ENCODE measurements at regions of chr17 and their contacts with region 1.

Region 1: GRCh38 chr17:37373530-37374159 is 2.1 kb upstream of the C17orf78 start:
- DNase-seq: peak in 8 of 10 donors; percentile 42 to 75 (median 56)
- H3K4me3 ChIP-seq: peak overlapping the region in 1 of 59 donors; percentile 9
- H3K27ac ChIP-seq: no peak overlapping the region
- H3K27me3 ChIP-seq: no peaks in the 10 kb centered on the region
- CTCF ChIP-seq: peak; percentile 20 to 97 (median 90)

Region 2: DNA sequence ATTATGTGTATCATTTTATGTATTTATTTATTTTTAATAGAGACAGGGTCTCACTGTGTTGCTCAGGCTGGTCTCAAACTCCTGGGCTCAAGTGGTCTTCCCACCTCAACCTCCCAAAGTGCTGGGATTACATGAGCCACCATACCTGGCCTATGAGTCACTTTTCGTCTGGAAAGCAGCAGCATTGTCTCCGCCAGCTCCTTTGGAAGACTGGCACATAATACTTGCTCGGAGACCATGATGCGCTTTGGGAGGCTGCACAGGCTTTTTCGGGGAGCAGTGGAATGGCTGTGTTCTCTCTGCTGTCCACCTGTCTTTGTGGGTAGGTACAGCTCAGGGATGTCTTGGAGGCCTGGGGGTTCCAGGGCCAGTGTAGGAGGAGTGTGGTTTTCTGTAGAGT is 322.7 kb before region 1 on chr17:
- intact Hi-C with region 1: no loop called
- DNase-seq: no peak
- H3K4me3 ChIP-seq: no peak overlapping the region
- H3K27ac ChIP-seq: no peak overlapping the region
- H3K27me3 ChIP-seq: no peaks in the 10 kb centered on the region
- CTCF ChIP-seq: no peak

Region 3: DNA sequence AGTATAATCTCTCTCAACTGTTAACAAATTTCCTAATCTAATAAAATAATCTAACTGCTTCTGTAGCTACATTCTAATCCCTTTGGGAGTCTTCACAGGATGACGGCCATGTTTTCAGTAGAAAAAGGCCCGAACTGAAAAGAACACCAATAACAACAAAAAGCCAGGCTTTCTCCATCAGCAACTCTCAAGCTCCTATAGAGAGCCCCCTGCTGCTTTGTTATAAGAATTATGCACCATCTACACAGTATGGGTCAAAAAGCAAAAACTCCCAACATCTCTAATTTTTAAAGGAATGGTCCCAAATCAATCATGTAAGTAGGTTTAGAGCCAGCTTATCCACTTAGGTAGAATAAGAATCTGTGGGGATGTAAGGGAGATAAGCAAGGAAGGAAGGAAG is 161.5 kb before region 1 on chr17:
- intact Hi-C with region 1: no loop called
- DNase-seq: no peak
- H3K4me3 ChIP-seq: no peak overlapping the region
- H3K27ac ChIP-seq: no peak overlapping the region
- H3K27me3 ChIP-seq: no peaks in the 10 kb centered on the region
- CTCF ChIP-seq: peak in 32 of 56 donors; percentile 8 to 61 (median 29)

Region 4: GRCh38 chr17:37255432-37255831 is 118.2 kb before region 1 on chr17:
- intact Hi-C with region 1: loop called in 1 of 2 experiments (anchors 2 kb)
- DNase-seq: no peak
- H3K4me3 ChIP-seq: no peak overlapping the region
- H3K27ac ChIP-seq: no peak overlapping the region
- H3K27me3 ChIP-seq: no peaks in the 10 kb centered on the region
- CTCF ChIP-seq: peak in 11 of 56 donors; percentile 13 to 57 (median 23)

Region 5: DNA sequence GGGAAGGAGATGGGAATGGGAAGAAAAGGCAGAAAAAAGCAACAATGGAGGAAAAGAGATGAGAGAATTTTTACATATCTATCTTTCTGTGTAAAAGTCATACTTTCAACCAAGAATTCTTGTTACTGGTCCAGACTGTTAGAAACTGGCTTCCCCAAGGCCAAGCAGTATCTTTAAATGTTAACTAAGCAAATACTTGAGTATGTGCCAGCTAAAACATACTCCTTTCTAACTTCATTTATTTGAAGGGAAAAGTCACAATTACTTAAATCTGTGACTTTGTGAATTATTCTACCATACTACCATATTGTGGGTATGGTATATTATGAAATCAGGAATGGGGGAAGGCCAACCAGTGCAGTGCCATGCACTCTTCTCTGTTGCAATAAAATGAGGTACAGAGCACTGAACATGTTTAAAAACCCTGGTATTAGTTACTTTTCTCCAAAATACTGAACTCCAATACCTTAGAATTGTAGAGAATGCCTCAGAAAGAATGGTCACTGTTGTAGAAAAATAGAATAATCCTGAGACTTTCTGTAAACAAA is 90.2 kb before region 1 on chr17:
- intact Hi-C with region 1: no loop called
- DNase-seq: no peak
- H3K4me3 ChIP-seq: no peak overlapping the region
- H3K27ac ChIP-seq: peak overlapping the region in 1 of 59 donors; percentile 10
- H3K27me3 ChIP-seq: no peaks in the 10 kb centered on the region
- CTCF ChIP-seq: no peak

Region 6: DNA sequence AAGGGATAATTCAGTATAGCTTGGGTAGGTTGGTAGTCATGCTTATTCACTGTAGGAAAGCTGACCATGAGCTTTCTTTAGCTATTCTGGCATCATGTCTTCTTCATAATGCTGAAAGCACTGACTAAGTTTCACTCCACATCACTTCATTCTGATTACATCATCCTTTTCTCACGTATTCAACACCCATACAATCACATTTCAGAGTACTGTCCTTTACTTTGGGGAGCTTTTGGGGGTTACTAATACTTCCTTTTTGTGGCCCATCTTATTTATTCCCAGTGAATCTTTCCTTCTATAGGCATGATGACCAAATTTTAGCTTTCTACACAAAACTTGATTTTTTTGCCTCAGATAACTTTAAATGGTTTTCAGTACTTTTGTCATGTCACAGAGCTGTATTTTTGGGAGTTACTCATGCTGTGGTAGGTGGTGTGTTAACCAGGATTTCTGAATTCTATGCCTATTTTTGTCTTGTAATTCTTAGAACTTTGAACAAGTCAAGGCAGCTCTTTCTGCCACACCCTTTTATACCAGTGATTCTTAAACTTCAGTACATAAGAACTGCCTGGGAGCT is 56.5 kb after region 1 on chr17:
- intact Hi-C with region 1: no loop called
- DNase-seq: no peak
- H3K4me3 ChIP-seq: no peak overlapping the region
- H3K27ac ChIP-seq: peak overlapping the region in 25 of 59 donors; percentile 1 to 78 (median 28)
- H3K27me3 ChIP-seq: no peaks in the 10 kb centered on the region
- CTCF ChIP-seq: no peak

Measured in dorsolateral prefrontal cortex (tissue), 120 donors.